ENCODE measurements at regions of chr4 and their contacts with region 1.

Region 1: DNA sequence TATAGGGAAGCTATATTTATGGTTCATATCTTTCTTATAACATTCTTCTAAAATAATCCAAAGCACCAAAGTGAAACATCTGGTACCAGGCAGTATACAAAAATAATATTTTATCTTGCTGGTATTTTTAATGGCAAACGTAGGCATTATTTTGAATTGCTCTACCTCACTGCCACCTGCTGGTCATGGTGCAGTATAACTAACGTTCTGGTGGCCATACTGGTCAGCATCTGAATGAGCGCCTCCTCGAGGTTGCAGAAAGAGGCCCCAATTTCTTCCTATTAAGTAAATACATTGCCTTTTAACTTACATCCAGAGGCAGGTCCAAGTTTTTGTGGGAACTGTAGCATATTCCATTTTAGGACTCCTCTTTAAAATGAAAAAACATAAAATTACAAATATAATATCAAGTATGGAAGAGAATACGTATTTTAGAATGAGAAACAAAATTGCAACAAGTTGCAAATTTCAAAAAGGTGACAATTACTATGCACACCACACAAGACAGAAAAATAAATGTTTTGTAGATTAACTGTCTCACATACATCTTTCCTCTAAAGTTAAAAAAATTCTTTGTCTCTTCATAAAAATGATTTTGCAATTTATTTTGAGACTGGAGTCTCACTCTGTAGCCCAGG is 22.9 kb upstream of the CWH43 start:
- DNase-seq: peak; percentile 81
- ATAC-seq: peak; percentile 94
- H3K4me3 ChIP-seq: no peak overlapping the region
- H3K27ac ChIP-seq: no peak overlapping the region
- H3K4me1 ChIP-seq: no peaks in the 10 kb centered on the region
- H3K27me3 ChIP-seq: no peaks in the 10 kb centered on the region
- CTCF ChIP-seq: peak; percentile 98 to 99 (median 99)
- POLR2A ChIP-seq: no peak
- RAD21 ChIP-seq: peak; percentile 97

Region 2: DNA sequence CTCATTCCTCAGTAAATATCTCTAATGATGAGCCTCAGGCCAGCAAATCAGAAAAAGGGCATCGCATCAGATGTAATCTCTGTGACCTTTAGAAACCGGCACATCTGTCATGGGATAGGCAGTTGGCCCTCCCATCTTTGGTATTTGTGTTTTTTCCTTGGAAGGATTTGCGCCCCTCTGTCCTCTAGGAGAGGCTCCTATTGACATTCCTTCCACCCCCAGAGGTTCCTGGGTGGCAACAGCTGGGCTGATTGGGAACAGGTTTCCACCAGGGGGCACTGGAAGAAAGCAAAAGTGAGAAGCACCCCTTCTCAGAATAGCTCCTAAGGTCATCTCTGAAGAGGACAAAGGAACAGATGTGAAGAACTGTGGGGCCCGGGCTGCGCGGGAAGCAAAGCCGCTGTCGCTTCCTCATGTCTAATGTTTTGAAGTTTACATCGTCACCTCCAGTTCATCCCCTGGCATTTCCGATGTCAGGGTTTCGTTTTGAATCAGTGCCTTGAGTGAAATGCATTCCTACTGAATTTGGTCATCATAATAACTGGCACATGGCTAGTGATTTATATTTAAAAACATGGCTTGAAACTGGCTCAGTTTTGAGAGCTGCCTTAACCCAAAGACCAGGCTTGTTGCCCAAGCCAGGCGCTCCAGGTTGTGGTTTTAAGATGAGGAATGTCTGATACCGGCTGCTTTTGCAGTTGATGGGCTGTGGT is 835.3 kb before region 1 on chr4:
- CTCF ChIA-PET with region 1: interaction called, 4 read pairs
- POLR2A ChIA-PET with region 1: no interaction called
- RAD21 ChIA-PET with region 1: no interaction called
- intact Hi-C with region 1: loop called (anchors 5 kb)
- DNase-seq: peak; percentile 72
- ATAC-seq: peak; percentile 88
- H3K4me3 ChIP-seq: peak overlapping the region in 1 of 2 experiments; percentile 32; a peak in 3 of 4 replicates
- H3K27ac ChIP-seq: peak overlapping the region; percentile 38; the same call in 1 of the 2 replicates
- H3K4me1 ChIP-seq: peaks cover 32 to 38% of the 10 kb centered on the region in 2 experiments
- H3K27me3 ChIP-seq: no peaks in the 10 kb centered on the region
- CTCF ChIP-seq: peak; percentile 72 to 84 (median 80)
- POLR2A ChIP-seq: no peak
- RAD21 ChIP-seq: peak; percentile 85

Region 3: DNA sequence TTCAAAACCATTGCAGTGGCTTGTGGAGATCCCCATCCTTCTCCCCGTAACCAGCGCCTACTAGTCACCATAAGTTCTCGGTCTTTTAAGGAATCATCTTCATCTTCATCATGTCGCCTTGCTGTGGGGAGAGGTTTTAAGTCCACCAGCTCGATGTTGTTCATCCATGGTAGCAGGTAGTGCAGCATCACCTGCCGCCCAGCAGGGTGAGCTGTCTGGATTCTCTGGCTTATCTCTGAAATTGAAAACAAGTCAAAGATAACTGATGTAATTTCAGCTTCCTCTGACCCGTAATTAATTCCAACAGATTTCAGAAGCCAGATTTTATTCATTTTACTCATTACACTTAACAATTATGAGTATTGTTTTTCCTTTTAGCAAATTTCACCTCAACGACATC is 405.7 kb before region 1 on chr4:
- CTCF ChIA-PET with region 1: no interaction called
- POLR2A ChIA-PET with region 1: no interaction called
- RAD21 ChIA-PET with region 1: no interaction called
- intact Hi-C with region 1: loop called (anchors 2 kb)
- DNase-seq: no peak
- ATAC-seq: peak; percentile 60; the same call in 1 of the 2 replicates
- H3K4me3 ChIP-seq: no peak overlapping the region
- H3K27ac ChIP-seq: no peak overlapping the region
- H3K4me1 ChIP-seq: no peaks in the 10 kb centered on the region
- H3K27me3 ChIP-seq: no peaks in the 10 kb centered on the region
- CTCF ChIP-seq: peak in 2 of 3 experiments; percentile 60 to 63; a peak in 4 of 6 replicates
- POLR2A ChIP-seq: no peak
- RAD21 ChIP-seq: peak; percentile 24; the same call in 1 of the 2 replicates

Region 4: DNA sequence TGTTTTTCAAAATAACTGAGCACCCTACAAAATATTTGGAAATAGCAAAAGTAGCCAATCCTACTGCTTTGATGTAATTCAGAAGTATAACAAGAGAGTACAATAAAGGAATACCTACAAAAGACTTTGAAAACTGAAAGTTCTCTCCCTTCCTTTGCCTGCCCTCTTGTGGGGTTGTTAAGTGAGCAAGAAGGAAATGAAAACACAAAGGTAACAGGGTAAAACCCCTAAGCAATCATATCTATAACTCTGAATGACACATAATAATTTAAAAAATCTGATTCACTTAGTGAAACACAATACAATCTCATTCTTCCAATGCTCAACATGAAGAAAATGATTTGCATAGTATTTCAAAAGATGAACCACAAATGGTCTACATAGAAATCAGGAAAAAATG is 281.3 kb before region 1 on chr4:
- CTCF ChIA-PET with region 1: no interaction called
- POLR2A ChIA-PET with region 1: no interaction called
- RAD21 ChIA-PET with region 1: no interaction called
- intact Hi-C with region 1: loop called (anchors 5 kb)
- DNase-seq: no peak
- ATAC-seq: no peak
- H3K4me3 ChIP-seq: no peak overlapping the region
- H3K27ac ChIP-seq: no peak overlapping the region
- H3K4me1 ChIP-seq: no peaks in the 10 kb centered on the region
- H3K27me3 ChIP-seq: no peaks in the 10 kb centered on the region
- CTCF ChIP-seq: peak in 2 of 3 experiments; percentile 32 to 34; a peak in 3 of 6 replicates
- POLR2A ChIP-seq: no peak
- RAD21 ChIP-seq: peak; percentile 51

Region 5: GRCh38 chr4:48906206-48907173 is 56.7 kb before region 1 on chr4 and contains the start of gene OCIAD2:
- CTCF ChIA-PET with region 1: no interaction called
- POLR2A ChIA-PET with region 1: no interaction called
- RAD21 ChIA-PET with region 1: no interaction called
- intact Hi-C with region 1: loop called (anchors 2 kb)
- DNase-seq: peak; percentile 55
- ATAC-seq: peak; percentile 82
- H3K4me3 ChIP-seq: peak within 1 kb of the TSS; percentile 78 to 84
- H3K27ac ChIP-seq: peak within 1 kb of the TSS; percentile 70; the same call in 1 of the 2 replicates
- H3K4me1 ChIP-seq: peaks cover 18 to 46% of the 10 kb centered on the region in 2 experiments
- H3K27me3 ChIP-seq: no peaks in the 10 kb centered on the region
- CTCF ChIP-seq: peak in 2 of 3 experiments; percentile 27 to 33; a peak in 3 of 6 replicates
- POLR2A ChIP-seq: no peak
- RAD21 ChIP-seq: peak; percentile 51; the same call in 1 of the 2 replicates
- total RNA-seq, gene OCIAD2: 64.0 TPM

Measured in HCT116 (cell line).